AG04450 (cell line): ENCODE measurements at regions of chr1 and their contacts with region 1.

Region 1: DNA sequence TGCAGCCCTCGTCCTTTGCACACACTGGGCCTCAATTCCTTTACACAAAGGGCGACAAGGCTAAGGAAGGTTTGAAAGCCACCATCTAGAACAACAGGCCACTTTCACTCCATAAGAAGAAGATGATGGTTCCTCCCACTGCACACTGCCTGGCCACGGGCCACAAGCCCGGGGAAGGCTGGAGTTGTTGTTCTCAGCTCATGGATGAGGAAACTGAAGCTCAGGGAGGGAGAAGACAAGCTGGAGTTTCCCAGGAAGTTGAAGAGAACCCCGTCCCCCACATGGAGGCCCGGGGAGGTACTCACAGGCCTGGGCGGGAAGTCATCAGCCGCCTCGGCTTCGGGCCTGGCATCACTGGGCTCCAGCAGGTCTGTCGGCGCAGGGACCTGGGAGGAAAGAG is 24.6 kb upstream of the DDOST start:
- DNase-seq: no peak
- H3K4me3 ChIP-seq: no peak overlapping the region
- H3K27ac ChIP-seq: no peak overlapping the region
- H3K27me3 ChIP-seq: no peaks in the 10 kb centered on the region
- CTCF ChIP-seq: no peak

Region 2: DNA sequence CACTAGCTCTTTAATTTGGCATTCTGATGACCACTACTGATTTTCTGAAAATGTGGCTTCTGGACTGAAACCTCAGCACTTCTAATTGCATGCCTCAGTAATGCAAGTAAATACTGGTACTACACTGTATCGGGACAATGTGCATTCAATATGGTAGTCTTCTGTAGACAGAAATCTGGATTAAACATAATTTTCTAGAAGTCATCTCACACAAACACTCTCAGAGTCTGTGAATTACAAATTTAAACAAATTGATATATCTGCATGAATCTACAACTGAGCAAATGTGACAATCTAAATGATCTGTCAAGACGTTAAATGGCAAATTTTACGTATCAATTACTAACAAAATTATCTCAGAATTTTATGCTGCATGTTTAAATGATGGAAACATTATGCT is 77.7 kb after region 1 on chr1:
- CTCF ChIA-PET with region 1: no interaction called
- POLR2A ChIA-PET with region 1: interaction called, 13 read pairs
- DNase-seq: no peak
- H3K4me3 ChIP-seq: no peak overlapping the region
- H3K27ac ChIP-seq: no peak overlapping the region
- H3K27me3 ChIP-seq: no peaks in the 10 kb centered on the region
- CTCF ChIP-seq: no peak